A549 (cell line): ENCODE measurements at regions of chr11 and their contacts with region 1.

Region 1: DNA sequence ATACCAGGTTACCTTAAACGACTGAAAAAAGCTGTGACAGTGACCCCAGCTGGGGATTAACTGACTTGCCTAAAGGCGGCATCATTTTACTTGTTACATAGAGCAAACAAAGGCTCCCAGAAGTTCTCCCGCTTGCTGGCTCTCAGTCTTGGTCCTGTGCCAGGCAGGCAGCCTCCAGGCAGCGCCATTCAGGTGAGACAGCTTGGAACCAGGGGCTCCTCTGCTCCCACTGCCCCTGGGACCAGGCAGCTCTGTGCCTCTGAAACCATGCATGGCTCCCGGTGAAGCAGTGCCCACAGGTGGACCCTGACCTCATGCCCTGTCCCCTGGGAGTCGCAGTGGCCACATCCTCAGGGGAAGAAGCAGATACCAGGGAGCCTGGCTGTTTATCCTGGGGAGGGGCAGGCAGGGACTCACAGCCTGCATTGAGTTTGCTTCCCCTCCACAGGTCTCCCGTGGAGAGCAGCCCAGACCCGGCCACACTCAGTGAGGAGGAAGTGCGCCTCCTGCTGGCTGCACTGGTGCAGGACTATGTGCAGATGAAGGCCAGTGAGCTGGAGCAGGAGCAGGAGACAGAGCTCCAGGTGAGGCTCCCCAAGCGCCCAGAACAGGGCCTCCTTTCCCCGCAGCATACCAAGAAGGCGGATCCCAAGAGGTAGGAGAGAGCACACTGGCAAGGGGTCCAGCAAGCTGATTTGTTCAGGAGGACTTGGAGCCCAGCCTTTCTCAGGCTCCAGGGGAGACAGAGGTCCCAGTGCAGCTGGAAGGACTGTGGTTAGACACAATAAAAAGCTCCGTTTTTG is 15.6 kb upstream of the CYP2R1 start:
- DNase-seq: peak; percentile 17 to 61
- ATAC-seq: peak; percentile 83 to 92
- H3K4me3 ChIP-seq: no peak overlapping the region
- H3K27ac ChIP-seq: no peak overlapping the region
- H3K4me1 ChIP-seq: peaks cover 6% of the 10 kb centered on the region; the same call in 2 of the 3 replicates
- CTCF ChIP-seq: peak; percentile 80
- EP300 ChIP-seq: no peak
- POLR2A ChIP-seq: no peak
- RAD21 ChIP-seq: peak; percentile 57 to 58

Region 2: GRCh38 chr11:14789879-14790484 is 117.6 kb before region 1 on chr11:
- CTCF ChIA-PET with region 1: interaction called, 129 read pairs
- POLR2A ChIA-PET with region 1: interaction called, 11 read pairs
- DNase-seq: peak in 1 of 2 experiments; percentile 10
- ATAC-seq: peak in 1 of 2 experiments; percentile 45; a peak in 1 of 6 replicates
- H3K4me3 ChIP-seq: no peak overlapping the region
- H3K27ac ChIP-seq: no peak overlapping the region
- H3K4me1 ChIP-seq: no peaks in the 10 kb centered on the region
- CTCF ChIP-seq: peak; percentile 68
- EP300 ChIP-seq: no peak
- POLR2A ChIP-seq: no peak
- RAD21 ChIP-seq: peak; percentile 67 to 73

Region 3: DNA sequence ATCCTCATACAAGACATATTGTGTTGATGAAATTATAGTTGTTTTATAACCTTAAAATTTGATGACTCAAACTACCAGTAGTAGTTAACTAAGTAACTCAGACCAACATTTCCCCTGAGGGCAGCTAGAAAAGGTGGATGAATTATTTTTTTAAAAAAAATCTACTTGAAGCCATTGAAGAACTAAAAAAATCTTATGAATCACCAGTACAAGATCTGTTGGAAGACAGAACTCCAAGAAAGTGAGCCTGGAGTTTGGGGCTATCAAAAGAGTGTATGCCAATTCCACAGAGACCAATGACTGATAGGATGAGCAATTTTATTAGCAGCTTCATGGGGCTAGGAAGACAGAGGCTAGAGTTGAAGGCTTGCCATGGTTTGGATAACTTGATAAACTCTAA is 88.0 kb before region 1 on chr11:
- CTCF ChIA-PET with region 1: interaction called, 10 read pairs
- POLR2A ChIA-PET with region 1: no interaction called
- DNase-seq: no peak
- ATAC-seq: no peak
- H3K4me3 ChIP-seq: no peak overlapping the region
- H3K27ac ChIP-seq: no peak overlapping the region
- H3K4me1 ChIP-seq: no peaks in the 10 kb centered on the region
- CTCF ChIP-seq: no peak
- EP300 ChIP-seq: no peak
- POLR2A ChIP-seq: no peak
- RAD21 ChIP-seq: no peak

Region 4: GRCh38 chr11:14835491-14836105 is 72.0 kb before region 1 on chr11:
- CTCF ChIA-PET with region 1: no interaction called
- POLR2A ChIA-PET with region 1: no interaction called
- DNase-seq: no peak
- ATAC-seq: no peak
- H3K4me3 ChIP-seq: no peak overlapping the region
- H3K27ac ChIP-seq: no peak overlapping the region
- H3K4me1 ChIP-seq: no peaks in the 10 kb centered on the region
- CTCF ChIP-seq: no peak
- EP300 ChIP-seq: no peak
- POLR2A ChIP-seq: no peak
- RAD21 ChIP-seq: no peak

Region 5: DNA sequence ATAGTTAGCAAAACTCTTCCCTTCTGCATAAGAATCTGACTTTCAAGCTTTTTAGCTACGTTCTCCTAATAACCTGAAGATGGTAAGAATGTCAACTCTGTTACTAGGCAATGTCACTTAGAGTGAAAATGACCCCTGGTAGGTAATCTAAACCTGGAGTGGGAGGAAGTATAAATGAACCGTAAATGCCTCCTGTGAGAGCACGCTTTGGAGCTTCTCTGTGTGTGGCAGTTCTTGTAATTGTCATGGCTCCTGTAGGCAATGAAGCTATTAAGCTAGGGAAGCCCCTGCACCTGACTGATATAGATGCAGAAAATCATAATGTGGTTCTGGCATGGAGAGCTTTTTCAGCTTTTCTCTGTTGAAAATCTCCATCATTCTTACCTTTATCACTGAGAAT is 35.1 kb after region 1 on chr11:
- CTCF ChIA-PET with region 1: interaction called, 10 read pairs
- POLR2A ChIA-PET with region 1: no interaction called
- DNase-seq: no peak
- ATAC-seq: no peak
- H3K4me3 ChIP-seq: no peak overlapping the region
- H3K27ac ChIP-seq: no peak overlapping the region
- H3K4me1 ChIP-seq: no peaks in the 10 kb centered on the region
- CTCF ChIP-seq: no peak
- EP300 ChIP-seq: no peak
- POLR2A ChIP-seq: no peak
- RAD21 ChIP-seq: no peak

Region 6: DNA sequence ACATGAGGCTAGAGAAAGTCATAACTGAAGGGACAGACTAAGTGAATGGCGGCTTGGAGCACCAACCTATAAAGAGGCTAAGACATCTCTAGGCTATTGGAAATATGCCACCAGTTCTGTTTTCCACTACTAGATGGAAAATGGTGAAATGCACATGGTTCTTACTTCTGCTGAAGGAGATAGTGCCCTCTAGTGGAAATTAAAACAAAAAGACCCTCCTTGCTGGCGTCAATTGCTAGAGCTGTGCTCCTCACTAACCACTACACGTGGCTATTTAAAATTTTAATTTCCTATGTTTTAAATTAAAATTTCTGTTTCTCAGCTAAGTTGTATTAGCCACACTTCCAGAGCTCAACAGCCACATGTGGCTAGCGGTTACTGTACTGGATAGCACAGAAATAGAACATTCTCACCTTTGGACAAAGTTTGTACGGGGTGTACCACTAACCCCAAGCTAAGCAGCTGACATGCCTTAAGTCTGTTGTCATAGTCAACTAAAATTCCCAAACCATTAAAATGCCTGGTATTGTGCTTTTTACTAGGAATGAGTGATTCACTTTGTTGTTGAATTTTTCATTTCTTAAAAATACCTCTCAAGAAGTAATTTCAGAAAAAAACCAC is 98.6 kb after region 1 on chr11:
- CTCF ChIA-PET with region 1: interaction called, 36 read pairs
- POLR2A ChIA-PET with region 1: no interaction called
- DNase-seq: peak in 1 of 2 experiments; percentile 56
- ATAC-seq: peak; percentile 70 to 80; a peak in 4 of 6 replicates
- H3K4me3 ChIP-seq: no peak overlapping the region
- H3K27ac ChIP-seq: no peak overlapping the region
- H3K4me1 ChIP-seq: no peaks in the 10 kb centered on the region
- CTCF ChIP-seq: peak; percentile 52
- EP300 ChIP-seq: no peak
- POLR2A ChIP-seq: no peak
- RAD21 ChIP-seq: peak; percentile 32 to 53; a peak in 3 of 5 replicates

Region 7: GRCh38 chr11:15208378-15209222 is 301.0 kb after region 1 on chr11:
- CTCF ChIA-PET with region 1: interaction called, 36 read pairs
- POLR2A ChIA-PET with region 1: no interaction called
- DNase-seq: peak; percentile 56 to 80
- ATAC-seq: peak; percentile 92 to 100
- H3K4me3 ChIP-seq: no peak overlapping the region
- H3K27ac ChIP-seq: no peak overlapping the region
- H3K4me1 ChIP-seq: no peaks in the 10 kb centered on the region
- CTCF ChIP-seq: peak; percentile 83
- EP300 ChIP-seq: no peak
- POLR2A ChIP-seq: no peak
- RAD21 ChIP-seq: peak; percentile 92 to 96

Region 8: GRCh38 chr11:15379483-15379882 is 471.9 kb after region 1 on chr11:
- CTCF ChIA-PET with region 1: no interaction called
- POLR2A ChIA-PET with region 1: no interaction called
- DNase-seq: no peak
- ATAC-seq: no peak
- H3K4me3 ChIP-seq: no peak overlapping the region
- H3K27ac ChIP-seq: no peak overlapping the region
- H3K4me1 ChIP-seq: no peaks in the 10 kb centered on the region
- CTCF ChIP-seq: no peak
- EP300 ChIP-seq: no peak
- POLR2A ChIP-seq: no peak
- RAD21 ChIP-seq: no peak